Right cardiac atrium (tissue), 5 donors: ENCODE measurements at regions of chr18 and their contacts with region 1.

Region 1: GRCh38 chr18:56748698-56749268 is 97.6 kb downstream of the WDR7 start:
- DNase-seq: no peak
- ATAC-seq: no peak
- H3K4me3 ChIP-seq: no peak overlapping the region
- H3K27ac ChIP-seq: no peak overlapping the region
- H3K4me1 ChIP-seq: peaks cover 6% of the 10 kb centered on the region
- H3K27me3 ChIP-seq: no peaks in the 10 kb centered on the region

Region 2: DNA sequence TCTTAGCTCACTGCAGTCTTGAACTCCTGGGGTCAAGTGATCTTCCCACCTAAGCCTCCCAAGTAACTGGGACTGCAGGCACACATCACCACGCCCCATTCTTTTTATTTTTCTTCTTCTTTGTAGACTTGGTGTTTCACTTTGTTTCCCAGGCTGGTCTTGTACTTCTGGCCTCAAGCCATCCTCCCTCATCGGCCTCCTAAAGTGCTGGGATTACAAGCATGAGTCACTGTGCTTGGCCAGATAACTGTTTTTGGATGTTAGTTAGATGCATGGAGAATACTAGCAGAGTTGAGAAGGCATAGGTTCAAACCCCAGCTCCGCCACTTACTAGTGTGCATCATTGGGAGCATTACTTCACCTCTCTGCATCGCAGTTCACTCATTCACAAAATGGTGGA is 198.7 kb before region 1 on chr18:
- intact Hi-C with region 1: no loop called
- DNase-seq: no peak
- ATAC-seq: no peak
- H3K4me3 ChIP-seq: no peak overlapping the region
- H3K27ac ChIP-seq: no peak overlapping the region
- H3K4me1 ChIP-seq: no peaks in the 10 kb centered on the region
- H3K27me3 ChIP-seq: no peaks in the 10 kb centered on the region

Region 3: GRCh38 chr18:56606618-56607017 is 142.2 kb before region 1 on chr18:
- intact Hi-C with region 1: no loop called
- DNase-seq: no peak
- ATAC-seq: no peak
- H3K4me3 ChIP-seq: no peak overlapping the region
- H3K27ac ChIP-seq: no peak overlapping the region
- H3K4me1 ChIP-seq: no peaks in the 10 kb centered on the region
- H3K27me3 ChIP-seq: no peaks in the 10 kb centered on the region

Region 4: DNA sequence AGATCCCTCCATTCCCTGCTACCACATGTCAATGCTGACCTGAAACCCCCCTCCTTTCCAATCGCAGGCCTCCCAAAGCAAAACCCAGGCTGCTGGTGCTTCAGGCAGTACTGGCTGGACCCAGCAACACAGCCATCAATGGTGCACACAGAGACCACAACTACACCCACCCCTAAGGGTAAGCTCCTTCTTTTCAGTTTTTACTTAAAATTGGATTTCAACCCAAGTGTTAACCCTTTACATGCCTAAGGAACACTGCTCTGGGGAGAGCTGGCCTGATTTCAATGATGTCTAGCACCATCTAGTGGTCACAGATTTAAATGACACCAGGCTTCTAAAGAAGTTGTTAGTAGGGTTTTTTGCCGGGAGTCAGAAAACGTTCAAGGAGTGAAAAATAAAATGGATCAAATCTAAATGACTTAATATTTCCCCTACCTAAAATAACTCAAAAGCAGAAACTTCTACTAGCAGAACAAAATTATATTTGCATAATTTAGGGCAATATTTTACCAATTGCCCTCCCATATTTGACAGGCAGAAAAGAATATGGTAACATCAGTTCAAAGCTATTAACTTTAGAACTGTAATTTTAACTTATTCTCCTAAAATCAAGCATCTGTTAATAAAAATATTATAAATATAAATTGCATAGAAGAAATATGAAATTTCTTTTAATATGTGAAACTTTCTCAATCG is 813.1 kb after region 1 on chr18:
- intact Hi-C with region 1: loop called in 2 of 4 experiments (anchors 10 kb)
- DNase-seq: no peak
- ATAC-seq: peak in 1 of 2 donors; percentile 39
- H3K4me3 ChIP-seq: no peak overlapping the region
- H3K27ac ChIP-seq: no peak overlapping the region
- H3K4me1 ChIP-seq: no peaks in the 10 kb centered on the region
- H3K27me3 ChIP-seq: no peaks in the 10 kb centered on the region